Ascending aorta (tissue), 2 donors: ENCODE measurements at regions of chrX and their contacts with region 1.

Region 1: GRCh38 chrX:57367649-57368048 is 81.1 kb downstream of the FAAH2 start:
- DNase-seq: no peak
- H3K4me3 ChIP-seq: no peak overlapping the region
- H3K27ac ChIP-seq: no peak overlapping the region
- H3K4me1 ChIP-seq: no peaks in the 10 kb centered on the region
- H3K27me3 ChIP-seq: no peaks in the 10 kb centered on the region
- CTCF ChIP-seq: no peak

Region 2: DNA sequence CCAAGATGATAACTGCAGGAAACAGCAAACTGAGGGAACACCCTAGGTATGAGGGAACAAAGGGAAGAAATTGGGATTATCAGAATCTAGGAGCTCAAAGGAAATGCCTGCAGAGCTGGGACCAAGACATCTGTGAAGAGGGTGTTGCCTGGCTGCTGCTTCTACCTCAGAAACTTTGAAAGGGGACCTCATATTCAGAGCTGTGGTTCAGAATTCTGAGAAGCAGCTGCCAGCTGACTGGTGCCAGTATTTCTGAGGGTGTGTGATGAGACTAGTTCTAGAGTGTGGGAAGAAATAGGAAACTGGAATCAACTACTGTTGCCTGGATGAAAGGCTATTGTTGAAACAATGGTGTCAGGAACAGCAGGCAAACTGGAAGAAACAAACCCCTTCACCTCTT is 72.7 kb before region 1 on chrX:
- intact Hi-C with region 1: loop called (anchors 10 kb)
- DNase-seq: no peak
- H3K4me3 ChIP-seq: no peak overlapping the region
- H3K27ac ChIP-seq: no peak overlapping the region
- H3K4me1 ChIP-seq: no peaks in the 10 kb centered on the region
- H3K27me3 ChIP-seq: no peaks in the 10 kb centered on the region
- CTCF ChIP-seq: no peak

Region 3: GRCh38 chrX:57453901-57454300 is 86.3 kb after region 1 on chrX:
- intact Hi-C with region 1: no loop called
- DNase-seq: no peak
- H3K4me3 ChIP-seq: no peak overlapping the region
- H3K27ac ChIP-seq: no peak overlapping the region
- H3K4me1 ChIP-seq: no peaks in the 10 kb centered on the region
- H3K27me3 ChIP-seq: no peaks in the 10 kb centered on the region
- CTCF ChIP-seq: peak in 1 of 3 experiments; percentile 16